CD8-positive, alpha-beta T cell (primary cell): ENCODE measurements at regions of chr2 and their contacts with region 1.

Region 1: DNA sequence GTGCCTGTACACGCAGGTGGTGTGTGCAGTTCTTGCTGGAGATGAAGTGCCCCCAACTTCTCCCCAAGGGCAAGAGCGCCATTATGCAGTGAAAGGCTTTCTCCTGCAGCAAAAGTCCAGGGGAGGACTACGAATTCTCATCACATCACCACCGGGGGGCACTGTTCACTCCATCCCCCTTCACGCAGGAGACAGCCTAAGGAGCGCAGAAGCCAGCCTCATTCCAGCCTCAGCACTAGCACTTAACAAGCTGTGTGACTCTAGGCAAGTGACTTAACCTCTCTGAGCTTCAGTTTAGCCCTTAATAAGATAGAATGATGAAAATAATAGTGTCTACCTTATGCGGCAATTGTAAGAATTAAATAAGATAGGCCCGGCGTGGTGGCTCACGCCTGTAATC is 32.3 kb downstream of the DNMT3A start:
- DNase-seq: peak; percentile 40 to 80 (median 75)
- ATAC-seq: peak; percentile 39
- H3K4me3 ChIP-seq: no peak overlapping the region
- H3K4me3 Mint-ChIP-seq: peak overlapping the region; percentile 11
- H3K27ac ChIP-seq: no peak overlapping the region
- H3K27ac Mint-ChIP-seq: peak overlapping the region; percentile 79
- H3K4me1 ChIP-seq: peaks cover 90% of the 10 kb centered on the region
- H3K4me1 Mint-ChIP-seq: peaks cover 85% of the 10 kb centered on the region
- H3K27me3 ChIP-seq: no peaks in the 10 kb centered on the region
- H3K27me3 Mint-ChIP-seq: no peaks in the 10 kb centered on the region
- CTCF ChIP-seq: peak; percentile 51

Region 2: DNA sequence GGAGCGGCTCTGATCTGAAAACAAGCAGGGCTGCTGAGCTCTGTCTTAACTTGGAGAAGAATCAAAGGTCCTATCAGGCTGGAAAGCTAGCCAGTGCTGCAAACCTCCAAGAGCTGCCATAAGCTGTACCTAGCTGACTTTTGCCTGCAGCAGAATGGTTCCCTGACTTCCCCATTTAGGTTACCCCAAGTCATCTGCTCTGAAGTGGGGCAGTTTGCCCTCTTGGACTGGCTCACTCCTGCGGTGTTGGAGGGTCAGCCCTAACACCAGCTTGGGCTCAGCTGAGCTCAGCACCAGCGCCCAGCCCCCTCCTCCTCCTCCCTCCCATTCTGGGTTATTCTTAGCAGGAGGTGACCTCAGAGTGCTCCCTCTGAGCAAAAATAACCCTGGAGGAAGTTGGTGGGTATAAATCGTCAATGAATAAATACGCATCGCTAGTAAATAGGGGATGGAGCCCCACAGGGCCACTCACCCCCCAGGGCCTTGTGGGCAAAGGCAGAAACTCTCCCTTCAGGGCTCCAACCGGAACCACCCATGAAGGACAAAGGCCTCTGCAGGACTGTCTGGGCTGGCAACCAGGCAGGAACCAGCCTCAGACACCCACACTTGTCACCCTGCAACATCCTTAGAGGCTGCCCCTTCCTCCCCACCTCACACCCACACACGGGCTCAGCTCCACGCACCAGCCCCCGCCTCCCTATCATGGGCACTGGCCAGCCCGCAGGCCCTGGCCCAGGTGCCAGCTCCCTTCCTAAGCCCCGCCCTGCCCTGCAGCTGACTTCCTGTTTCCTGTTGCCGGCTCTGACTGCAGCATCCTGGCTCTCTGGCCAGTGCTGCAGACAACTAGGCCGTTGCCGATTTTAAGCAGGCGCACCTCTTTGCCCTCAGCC is 14.6 kb before region 1 on chr2:
- CTCF ChIA-PET with region 1: interaction called, 20 read pairs
- POLR2A ChIA-PET with region 1: interaction called, 17 read pairs
- intact Hi-C with region 1: loop called in 1 of 2 experiments (anchors 2 kb)
- DNase-seq: peak; percentile 49 to 91 (median 85)
- ATAC-seq: peak; percentile 81
- H3K4me3 ChIP-seq: peak overlapping the region; percentile 18 to 46
- H3K4me3 Mint-ChIP-seq: peak overlapping the region; percentile 79
- H3K27ac ChIP-seq: peak overlapping the region; percentile 70 to 80
- H3K27ac Mint-ChIP-seq: peak overlapping the region; percentile 97
- H3K4me1 ChIP-seq: peaks cover 72% of the 10 kb centered on the region
- H3K4me1 Mint-ChIP-seq: peaks cover 59% of the 10 kb centered on the region
- H3K27me3 ChIP-seq: no peaks in the 10 kb centered on the region
- H3K27me3 Mint-ChIP-seq: no peaks in the 10 kb centered on the region
- CTCF ChIP-seq: no peak

Region 3: DNA sequence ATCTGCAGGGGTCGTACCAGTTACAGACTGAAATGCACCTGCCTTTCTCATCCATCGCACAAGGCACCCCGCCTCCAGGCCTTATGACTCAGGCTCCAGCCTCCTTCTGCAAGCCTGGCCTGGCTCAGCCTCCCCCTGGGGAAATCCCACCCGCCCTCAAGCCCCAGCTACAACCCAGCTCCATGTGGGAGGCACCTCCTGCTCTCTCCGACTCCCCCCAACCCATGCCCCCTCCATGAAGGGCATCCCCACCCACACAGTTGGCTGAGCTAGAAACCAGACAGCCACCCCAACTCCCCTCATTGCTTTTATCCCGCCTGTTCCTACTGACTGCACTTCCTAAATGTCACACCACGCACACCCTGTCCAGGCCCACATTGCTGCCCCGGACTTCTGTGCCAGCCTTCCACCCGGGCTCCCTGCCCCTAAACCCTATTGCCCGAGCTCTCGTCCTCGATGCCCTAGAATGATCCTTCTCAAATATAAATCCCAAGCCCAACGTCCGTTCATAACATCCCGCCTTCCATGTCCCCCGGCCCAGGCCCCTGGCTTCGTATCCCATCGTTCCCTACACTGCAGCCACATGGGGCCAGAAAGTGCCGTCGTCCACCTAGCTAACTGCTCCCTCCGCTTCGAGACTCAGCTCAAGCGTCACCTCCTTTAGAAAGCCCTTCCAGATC is 22.4 kb after region 1 on chr2:
- CTCF ChIA-PET with region 1: interaction called, 23 read pairs
- POLR2A ChIA-PET with region 1: interaction called, 7 read pairs
- intact Hi-C with region 1: loop called in 1 of 2 experiments (anchors 2 kb)
- DNase-seq: peak in 1 of 9 experiments; percentile 41
- ATAC-seq: no peak
- H3K4me3 ChIP-seq: no peak overlapping the region
- H3K4me3 Mint-ChIP-seq: no peak overlapping the region
- H3K27ac ChIP-seq: no peak overlapping the region
- H3K27ac Mint-ChIP-seq: peak overlapping the region; percentile 83
- H3K4me1 ChIP-seq: peaks cover 73% of the 10 kb centered on the region
- H3K4me1 Mint-ChIP-seq: peaks cover 68% of the 10 kb centered on the region
- H3K27me3 ChIP-seq: no peaks in the 10 kb centered on the region
- H3K27me3 Mint-ChIP-seq: no peaks in the 10 kb centered on the region
- CTCF ChIP-seq: no peak

Region 4: DNA sequence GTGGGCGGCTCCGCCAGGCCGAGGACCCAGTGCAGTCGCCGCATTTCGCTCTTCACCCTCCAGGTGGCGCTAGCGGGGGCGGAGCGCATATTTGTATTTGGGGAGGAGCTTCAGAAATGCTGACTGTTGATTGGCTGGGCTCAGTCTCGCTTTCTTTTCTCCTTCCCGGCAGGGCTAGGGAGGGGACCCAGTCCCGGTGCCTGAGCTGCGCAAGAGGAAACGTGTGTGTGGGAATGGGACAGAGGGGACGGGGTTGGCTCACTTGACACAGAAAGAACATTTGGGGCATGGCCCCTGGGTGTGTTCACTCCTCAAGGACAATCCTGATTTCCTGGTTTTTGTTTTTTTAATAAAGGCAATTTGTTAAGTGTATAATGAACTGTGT is 52.6 kb after region 1 on chr2:
- CTCF ChIA-PET with region 1: interaction called, 11 read pairs
- POLR2A ChIA-PET with region 1: interaction called, 8 read pairs
- intact Hi-C with region 1: no loop called
- DNase-seq: peak; percentile 87 to 99 (median 94)
- ATAC-seq: peak; percentile 94
- H3K4me3 ChIP-seq: peak overlapping the region; percentile 65 to 73
- H3K4me3 Mint-ChIP-seq: peak overlapping the region; percentile 89
- H3K27ac ChIP-seq: peak overlapping the region; percentile 49 to 84
- H3K27ac Mint-ChIP-seq: peak overlapping the region; percentile 94
- H3K4me1 ChIP-seq: peaks cover 15% of the 10 kb centered on the region
- H3K4me1 Mint-ChIP-seq: peaks cover 20% of the 10 kb centered on the region
- H3K27me3 ChIP-seq: no peaks in the 10 kb centered on the region
- H3K27me3 Mint-ChIP-seq: no peaks in the 10 kb centered on the region
- CTCF ChIP-seq: peak; percentile 94